Heart left ventricle (tissue), 16 donors: ENCODE measurements at regions of chr17 and their contacts with region 1.

Region 1: DNA sequence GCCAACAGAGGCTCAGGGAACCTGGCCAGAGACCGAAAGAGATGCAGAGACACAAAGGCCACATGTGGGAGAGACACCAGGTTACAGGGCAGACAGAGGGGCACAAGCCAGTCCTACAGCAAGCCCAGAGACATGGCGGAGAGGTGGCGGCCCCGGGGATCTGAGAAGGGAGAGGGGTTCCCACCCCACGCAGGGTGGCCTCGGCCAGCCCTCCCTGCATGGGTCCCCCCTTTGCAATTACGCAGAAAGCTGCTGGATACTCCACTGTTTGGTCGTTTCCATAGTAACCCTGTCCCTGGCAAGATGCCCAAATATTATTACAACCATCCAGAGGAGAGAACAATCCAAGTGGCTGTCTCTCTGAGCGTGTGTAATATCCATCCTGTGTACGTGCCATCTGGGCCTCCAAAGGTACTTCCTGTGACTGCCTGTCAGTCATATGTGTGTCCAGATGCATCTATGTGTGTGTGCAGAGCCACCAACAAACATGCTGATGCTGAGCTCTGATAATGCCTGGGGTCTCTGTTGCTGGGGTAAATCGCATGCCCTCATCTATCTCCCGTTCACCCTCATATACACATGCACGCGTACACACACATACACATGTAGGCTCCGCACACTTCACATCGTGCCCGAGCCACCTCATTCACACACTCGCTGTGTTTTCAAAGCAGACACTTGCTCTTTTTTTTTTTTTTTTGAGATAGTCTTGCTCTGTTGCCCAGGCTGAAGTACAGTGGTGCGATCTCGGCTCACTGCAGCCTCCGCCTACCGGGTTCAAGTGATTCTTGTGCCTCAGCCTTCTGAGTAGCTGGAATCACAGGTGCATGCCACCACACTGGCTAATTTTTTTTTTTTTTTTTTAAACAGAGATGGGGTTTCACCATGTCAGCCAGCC is 5.5 kb downstream of the PCGF2 start:
- DNase-seq: peak in 4 of 5 donors; percentile 52 to 80 (median 65)
- ATAC-seq: peak; percentile 40 to 74 (median 60)
- H3K4me3 ChIP-seq: peak overlapping the region in 3 of 12 donors; percentile 3 to 18 (median 14)
- H3K27ac ChIP-seq: peak overlapping the region; percentile 55 to 90 (median 74)
- H3K4me1 ChIP-seq: peaks cover 5 to 67% (median 49%) of the 10 kb centered on the region in 12 donors
- H3K27me3 ChIP-seq: peaks cover 0 to 5% (median 0%) of the 10 kb centered on the region in 9 donors
- CTCF ChIP-seq: no peak
- POLR2A ChIP-seq: no peak

Region 2: DNA sequence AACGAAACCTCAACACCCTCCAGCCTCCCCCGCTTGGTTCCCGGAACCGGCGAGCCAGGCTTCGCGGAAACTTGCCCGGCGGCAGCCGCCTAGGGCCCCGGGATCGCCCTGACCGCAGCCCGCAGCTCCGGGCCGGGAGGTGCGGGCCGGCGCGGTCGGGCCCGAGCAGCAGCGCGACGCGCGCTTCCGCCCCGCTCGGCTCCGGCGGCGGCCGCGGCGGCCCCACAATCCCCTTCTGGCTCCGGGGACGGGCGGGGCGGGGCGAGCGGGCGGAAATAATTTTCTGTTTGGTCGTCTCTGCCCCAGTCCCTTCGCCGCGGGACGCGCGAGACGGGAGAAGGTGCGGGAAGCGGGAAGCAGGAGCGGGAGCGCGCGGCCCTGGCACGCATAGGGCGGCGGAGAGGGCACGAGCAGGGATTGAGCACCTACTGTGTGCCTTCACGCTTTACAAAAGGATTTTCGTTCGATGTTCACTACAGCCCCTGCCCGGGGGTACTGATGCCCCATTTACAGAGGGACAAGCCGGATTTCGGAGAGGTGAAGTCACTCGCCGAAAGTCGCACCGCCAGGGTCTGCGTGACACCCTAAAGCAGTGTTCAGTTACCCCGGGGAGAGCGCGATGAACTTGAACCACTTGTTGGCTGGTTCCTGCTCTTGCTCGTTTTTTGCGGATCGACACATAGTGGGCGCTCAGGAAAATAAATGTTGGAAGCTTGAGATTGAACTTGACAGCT is 40.3 kb before region 1 on chr17:
- intact Hi-C with region 1: loop called in 1 of 10 experiments (anchors 5 kb)
- DNase-seq: peak; percentile 87 to 93 (median 92)
- ATAC-seq: peak; percentile 43 to 76 (median 68)
- H3K4me3 ChIP-seq: peak overlapping the region; percentile 45 to 97 (median 87)
- H3K27ac ChIP-seq: peak overlapping the region; percentile 82 to 99 (median 97)
- H3K4me1 ChIP-seq: peaks cover 4 to 62% (median 27%) of the 10 kb centered on the region in 12 donors
- H3K27me3 ChIP-seq: no peaks in the 10 kb centered on the region
- CTCF ChIP-seq: no peak
- POLR2A ChIP-seq: peak in 1 of 2 donors; percentile 85